ENCODE measurements at regions of chr3 and their contacts with region 1.

Region 1: GRCh38 chr3:95235916-95236315 is 1173.1 kb downstream of the NSUN3 start:
- DNase-seq: no peak
- ATAC-seq: no peak
- H3K4me3 ChIP-seq: no peak overlapping the region
- H3K4me3 Mint-ChIP-seq: no peak overlapping the region
- H3K27ac ChIP-seq: no peak overlapping the region
- H3K27ac Mint-ChIP-seq: no peak overlapping the region
- H3K4me1 ChIP-seq: no peaks in the 10 kb centered on the region
- H3K4me1 Mint-ChIP-seq: no peaks in the 10 kb centered on the region
- H3K27me3 ChIP-seq: no peaks in the 10 kb centered on the region
- H3K27me3 Mint-ChIP-seq: no peaks in the 10 kb centered on the region
- CTCF ChIP-seq: no peak

Region 2: GRCh38 chr3:95172549-95172948 is 63.4 kb before region 1 on chr3:
- intact Hi-C with region 1: loop called (anchors 10 kb)
- DNase-seq: no peak
- ATAC-seq: no peak
- H3K4me3 ChIP-seq: no peak overlapping the region
- H3K4me3 Mint-ChIP-seq: no peak overlapping the region
- H3K27ac ChIP-seq: no peak overlapping the region
- H3K27ac Mint-ChIP-seq: no peak overlapping the region
- H3K4me1 ChIP-seq: no peaks in the 10 kb centered on the region
- H3K4me1 Mint-ChIP-seq: no peaks in the 10 kb centered on the region
- H3K27me3 ChIP-seq: no peaks in the 10 kb centered on the region
- H3K27me3 Mint-ChIP-seq: no peaks in the 10 kb centered on the region
- CTCF ChIP-seq: no peak

Region 3: DNA sequence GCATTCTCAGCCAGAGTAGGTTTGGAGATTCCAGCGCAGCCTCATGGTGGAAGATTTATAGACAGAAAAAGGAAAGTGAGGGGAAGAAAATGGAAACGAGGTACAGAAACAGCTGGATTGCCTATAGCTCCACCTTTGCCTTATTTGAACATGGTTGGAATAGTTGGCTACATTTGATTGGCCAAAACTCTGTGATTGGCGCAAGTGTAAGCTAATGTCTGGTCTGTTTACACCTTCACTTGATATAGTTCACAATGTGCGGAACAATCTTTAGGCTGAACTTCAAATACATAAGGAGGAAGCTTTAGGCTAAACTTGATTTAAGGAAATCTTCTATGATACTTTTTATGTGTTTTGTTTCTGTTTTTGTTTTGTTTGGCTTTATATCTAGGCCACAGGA is 18.9 kb after region 1 on chr3:
- intact Hi-C with region 1: no loop called
- DNase-seq: no peak
- ATAC-seq: no peak
- H3K4me3 ChIP-seq: no peak overlapping the region
- H3K4me3 Mint-ChIP-seq: no peak overlapping the region
- H3K27ac ChIP-seq: no peak overlapping the region
- H3K27ac Mint-ChIP-seq: no peak overlapping the region
- H3K4me1 ChIP-seq: no peaks in the 10 kb centered on the region
- H3K4me1 Mint-ChIP-seq: no peaks in the 10 kb centered on the region
- H3K27me3 ChIP-seq: no peaks in the 10 kb centered on the region
- H3K27me3 Mint-ChIP-seq: no peaks in the 10 kb centered on the region
- CTCF ChIP-seq: no peak